Activated B cell treated with CpG ODN at 0.5 μM for 24 hours (primary cell): ENCODE measurements at regions of chr6 and their contacts with region 1.

Region 1: DNA sequence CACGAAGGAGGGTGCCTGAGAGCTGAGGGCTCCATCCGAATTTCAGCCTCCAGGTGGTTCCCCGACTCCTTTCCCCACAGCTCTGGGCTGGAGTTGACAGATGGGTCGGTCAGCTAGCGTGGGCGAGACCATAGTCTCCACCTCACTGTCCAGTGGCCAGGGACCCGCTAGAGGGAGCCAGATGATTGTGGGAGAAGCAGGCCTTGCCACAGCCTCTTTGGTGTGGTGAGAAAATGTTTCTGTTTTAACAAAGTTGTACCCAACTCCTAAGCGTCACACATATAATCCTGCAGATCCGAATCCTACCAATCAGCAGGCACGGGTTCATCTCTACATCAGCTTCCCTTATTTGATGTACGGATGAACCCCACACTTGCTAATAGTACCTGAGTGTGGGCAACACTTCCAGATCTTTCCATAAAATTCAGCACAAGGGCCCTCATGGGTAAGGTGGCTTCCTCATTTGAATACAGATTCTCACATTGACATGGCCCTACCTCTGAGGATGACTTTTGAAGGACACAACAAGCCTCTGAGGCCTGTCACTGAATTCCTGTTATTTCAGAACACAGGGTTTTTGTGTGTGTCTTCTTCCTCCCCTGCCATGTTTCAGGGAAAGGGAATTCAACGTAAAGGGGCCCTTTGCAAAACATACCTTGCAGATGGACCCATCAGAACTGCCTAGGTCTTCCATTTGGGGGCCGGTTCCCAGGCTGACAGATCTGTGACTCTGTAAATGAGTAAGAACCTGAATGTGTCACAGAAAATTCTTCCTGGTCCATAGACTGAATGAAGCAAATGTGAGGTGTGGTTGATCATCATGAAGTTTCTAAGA is 103.2 kb upstream of the DUSP22 start:
- DNase-seq: peak; percentile 63
- ATAC-seq: peak; percentile 69
- H3K4me3 Mint-ChIP-seq: peak overlapping the region; percentile 28
- H3K27ac Mint-ChIP-seq: peak overlapping the region; percentile 85
- H3K4me1 Mint-ChIP-seq: peaks cover 86% of the 10 kb centered on the region
- H3K27me3 Mint-ChIP-seq: no peaks in the 10 kb centered on the region
- CTCF ChIP-seq: no peak

Region 2: GRCh38 chr6:227074-227782 is 38.2 kb after region 1 on chr6:
- CTCF ChIA-PET with region 1: interaction called, 38 read pairs
- POLR2A ChIA-PET with region 1: interaction called, 31 read pairs
- intact Hi-C with region 1: loop called (anchors 1 kb)
- DNase-seq: no peak
- ATAC-seq: peak; percentile 90
- H3K4me3 Mint-ChIP-seq: peak overlapping the region; percentile 55
- H3K27ac Mint-ChIP-seq: peak overlapping the region; percentile 80
- H3K4me1 Mint-ChIP-seq: peaks cover 67% of the 10 kb centered on the region
- H3K27me3 Mint-ChIP-seq: no peaks in the 10 kb centered on the region
- CTCF ChIP-seq: no peak

Region 3: DNA sequence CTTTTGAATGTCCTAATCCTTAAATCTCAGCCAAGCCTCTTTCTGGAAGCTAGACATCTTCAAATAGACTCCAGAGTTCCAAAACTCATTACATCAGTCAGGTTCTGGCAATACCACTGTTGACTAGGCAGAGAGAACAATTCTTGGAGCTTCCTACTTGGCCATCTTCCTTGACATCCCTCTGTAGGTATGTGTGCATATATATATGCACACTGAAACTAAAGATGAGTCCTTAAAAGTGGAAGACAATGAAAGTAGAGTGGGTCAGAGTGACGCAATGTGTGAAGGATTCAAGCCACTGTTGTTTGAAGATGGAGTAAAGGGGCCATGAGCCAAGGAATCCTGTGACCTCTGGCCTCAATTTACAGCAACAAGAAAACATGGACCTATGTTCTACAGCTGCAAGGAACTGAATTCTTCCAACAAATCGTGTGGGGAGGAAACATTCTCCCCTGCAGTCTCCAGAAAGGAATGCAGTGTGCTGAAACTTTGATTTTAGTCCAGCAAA is 84.6 kb after region 1 on chr6:
- CTCF ChIA-PET with region 1: no interaction called
- POLR2A ChIA-PET with region 1: no interaction called
- intact Hi-C with region 1: no loop called
- DNase-seq: no peak
- ATAC-seq: no peak
- H3K4me3 Mint-ChIP-seq: no peak overlapping the region
- H3K27ac Mint-ChIP-seq: no peak overlapping the region
- H3K4me1 Mint-ChIP-seq: peaks cover 40% of the 10 kb centered on the region
- H3K27me3 Mint-ChIP-seq: no peaks in the 10 kb centered on the region
- CTCF ChIP-seq: no peak

Region 4: DNA sequence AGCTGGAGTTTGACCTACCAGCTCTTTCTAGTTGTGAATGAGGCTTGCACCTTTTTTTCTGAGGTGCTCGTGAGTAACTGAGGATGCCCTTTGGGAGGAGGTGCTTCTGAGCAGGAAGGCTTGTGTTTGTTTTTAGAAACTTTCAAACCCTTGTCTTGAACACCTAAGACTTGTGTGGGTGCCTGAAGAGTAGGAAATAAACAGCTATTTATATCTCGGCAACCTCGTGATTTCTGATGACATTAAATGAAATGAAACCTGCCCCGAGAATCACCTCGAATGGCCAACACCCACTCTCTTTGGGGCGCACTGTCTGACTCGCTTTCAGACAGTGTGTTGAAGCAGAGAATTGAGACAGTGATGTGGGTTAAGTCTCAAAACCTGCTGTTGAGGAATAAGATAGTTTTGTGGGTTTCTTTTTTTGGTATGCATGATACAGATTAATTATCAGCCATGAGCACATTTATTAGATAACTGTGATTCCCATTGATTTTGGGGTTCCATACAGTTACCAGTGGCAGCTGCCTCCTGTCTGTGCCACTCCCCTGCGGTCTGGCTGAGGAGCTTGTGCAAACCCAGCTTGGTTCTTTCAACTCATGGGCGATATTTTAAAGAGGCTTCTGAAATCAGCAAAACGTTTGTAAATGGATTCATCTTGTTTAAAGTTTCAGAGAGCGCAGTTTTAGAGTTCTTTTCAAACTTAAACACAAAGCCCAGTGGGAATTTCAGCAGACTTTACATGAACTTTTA is 210.9 kb after region 1 on chr6:
- CTCF ChIA-PET with region 1: interaction called, 8 read pairs
- POLR2A ChIA-PET with region 1: interaction called, 69 read pairs
- intact Hi-C with region 1: loop called (anchors 2 kb)
- DNase-seq: no peak
- ATAC-seq: peak; percentile 51
- H3K4me3 Mint-ChIP-seq: peak overlapping the region; percentile 29
- H3K27ac Mint-ChIP-seq: peak overlapping the region; percentile 69
- H3K4me1 Mint-ChIP-seq: peaks cover 93% of the 10 kb centered on the region
- H3K27me3 Mint-ChIP-seq: no peaks in the 10 kb centered on the region
- CTCF ChIP-seq: no peak

Region 5: DNA sequence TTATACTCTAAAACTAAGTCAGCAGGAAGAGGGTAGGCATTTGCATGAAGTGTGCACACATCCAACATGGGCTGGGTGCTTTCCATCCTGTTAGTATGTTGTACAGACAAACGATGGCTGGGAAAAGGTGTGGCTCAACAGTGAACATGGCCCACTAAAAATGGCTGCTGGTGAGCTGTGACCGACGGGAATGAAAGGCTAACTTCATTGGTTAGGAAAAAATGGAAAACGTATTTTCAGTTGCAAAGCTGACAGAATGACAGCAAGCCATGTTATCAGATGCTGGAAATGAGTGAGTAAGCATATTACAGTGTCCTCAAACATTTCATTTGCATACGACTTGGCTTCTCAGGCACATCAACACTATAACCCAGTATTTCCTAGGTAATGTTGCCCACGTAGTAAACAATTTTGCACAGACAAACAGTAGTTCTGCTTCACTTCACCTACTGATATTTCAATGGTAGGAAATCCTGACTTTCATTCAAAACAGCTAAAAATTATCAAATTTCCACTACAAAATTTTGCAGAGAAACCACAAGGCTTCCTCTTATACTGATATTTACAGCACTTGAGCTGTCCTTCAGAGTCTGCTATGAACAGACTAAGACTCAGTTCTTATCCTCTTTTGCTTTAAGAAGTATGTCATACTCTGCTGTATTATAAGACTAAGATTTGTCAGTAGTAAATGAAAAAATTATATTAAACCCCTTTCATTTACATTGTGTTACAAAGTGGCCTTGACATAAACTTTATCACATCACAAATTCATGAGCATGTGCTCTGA is 301.4 kb after region 1 on chr6:
- CTCF ChIA-PET with region 1: no interaction called
- POLR2A ChIA-PET with region 1: interaction called, 3 read pairs
- intact Hi-C with region 1: loop called (anchors 5 kb)
- DNase-seq: no peak
- ATAC-seq: peak; percentile 35
- H3K4me3 Mint-ChIP-seq: peak overlapping the region; percentile 65
- H3K27ac Mint-ChIP-seq: peak overlapping the region; percentile 92
- H3K4me1 Mint-ChIP-seq: peaks cover 64% of the 10 kb centered on the region
- H3K27me3 Mint-ChIP-seq: no peaks in the 10 kb centered on the region
- CTCF ChIP-seq: no peak

Region 6: DNA sequence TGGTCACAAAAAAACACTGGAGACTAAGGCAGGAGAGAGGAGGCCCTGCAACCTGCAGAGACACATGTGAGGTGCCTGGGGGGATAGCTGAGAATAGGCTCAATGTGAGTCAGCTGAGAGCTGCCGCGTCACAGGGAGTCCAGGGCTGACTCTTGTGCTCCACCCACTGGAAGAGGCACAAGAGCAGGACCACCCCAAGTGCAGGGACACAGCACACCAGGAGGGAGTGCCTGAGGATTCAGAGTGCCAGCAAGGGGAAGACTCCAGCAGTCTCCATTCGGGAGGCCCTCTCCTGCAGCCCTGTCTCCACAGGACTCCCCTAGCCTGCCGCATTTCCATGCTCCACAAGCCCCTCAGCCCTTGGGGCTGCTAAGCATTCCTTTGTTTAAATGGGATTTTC is 362.4 kb after region 1 on chr6:
- CTCF ChIA-PET with region 1: interaction called, 3 read pairs
- POLR2A ChIA-PET with region 1: no interaction called
- intact Hi-C with region 1: loop called (anchors 1 kb)
- DNase-seq: no peak
- ATAC-seq: peak; percentile 57
- H3K4me3 Mint-ChIP-seq: no peak overlapping the region
- H3K27ac Mint-ChIP-seq: no peak overlapping the region
- H3K4me1 Mint-ChIP-seq: no peaks in the 10 kb centered on the region
- H3K27me3 Mint-ChIP-seq: no peaks in the 10 kb centered on the region
- CTCF ChIP-seq: no peak

Region 7: GRCh38 chr6:593139-593906 is 404.3 kb after region 1 on chr6:
- CTCF ChIA-PET with region 1: interaction called, 16 read pairs
- POLR2A ChIA-PET with region 1: no interaction called
- intact Hi-C with region 1: no loop called
- DNase-seq: no peak
- ATAC-seq: peak; percentile 56
- H3K4me3 Mint-ChIP-seq: no peak overlapping the region
- H3K27ac Mint-ChIP-seq: no peak overlapping the region
- H3K4me1 Mint-ChIP-seq: no peaks in the 10 kb centered on the region
- H3K27me3 Mint-ChIP-seq: no peaks in the 10 kb centered on the region
- CTCF ChIP-seq: no peak

Region 8: GRCh38 chr6:1396952-1397868 is 1208.2 kb after region 1 on chr6:
- CTCF ChIA-PET with region 1: interaction called, 5 read pairs
- POLR2A ChIA-PET with region 1: no interaction called
- intact Hi-C with region 1: loop called (anchors 1 kb)
- DNase-seq: peak; percentile 67
- ATAC-seq: peak; percentile 58
- H3K4me3 Mint-ChIP-seq: no peak overlapping the region
- H3K27ac Mint-ChIP-seq: no peak overlapping the region
- H3K4me1 Mint-ChIP-seq: peaks cover 8% of the 10 kb centered on the region
- H3K27me3 Mint-ChIP-seq: peaks cover 48% of the 10 kb centered on the region
- CTCF ChIP-seq: peak; percentile 90